Activated T-helper 2 cell treated with anti-CD3 and anti-CD28 coated beads, Interferon-gamma antibody, Interleukin-2, Interleukin-4, amounts not matched to agents 10 μg/mL and 5 μg/mL and 100 μg/mL, durations not matched to agents 14 hours and 24 hours and 36 hours (primary cell): ENCODE measurements at regions of chr3 and their contacts with region 1.

Region 1: DNA sequence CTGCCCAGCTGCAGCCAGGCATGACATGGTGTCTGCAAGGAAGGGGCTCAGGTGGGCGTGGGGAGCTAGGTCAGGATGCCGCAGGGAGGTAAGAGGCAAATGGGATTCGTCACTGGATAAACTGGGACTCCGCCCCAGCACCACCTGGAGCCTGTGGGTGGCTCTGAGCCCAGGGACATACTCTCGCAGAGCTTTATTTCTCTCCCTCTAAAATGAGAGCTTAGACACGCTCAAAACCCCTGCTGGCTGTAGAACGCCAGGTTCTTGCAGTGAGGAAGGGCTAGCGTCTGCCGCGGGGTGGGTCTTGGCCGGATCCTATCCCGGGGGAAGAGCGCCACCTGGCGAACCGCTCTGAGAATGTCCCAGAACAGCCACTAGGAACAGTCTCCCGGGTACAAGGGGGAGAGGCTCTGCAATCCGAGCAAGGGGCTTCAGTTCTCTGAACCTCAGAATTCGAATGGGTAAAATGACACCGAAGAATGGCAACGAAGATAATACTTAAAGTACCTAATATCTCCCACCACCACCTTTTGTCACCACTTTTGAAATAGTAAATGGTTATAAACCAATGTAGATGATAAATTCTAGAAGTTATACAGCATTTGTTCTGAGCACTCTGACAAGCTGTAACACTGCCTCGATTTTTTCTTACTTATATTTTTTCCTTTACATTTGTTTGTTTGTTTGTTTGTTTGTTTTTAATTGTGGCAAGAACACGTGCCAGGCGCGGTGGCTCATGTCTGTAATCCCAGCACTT is 53.2 kb upstream of the SRGAP3 start:
- DNase-seq: peak; percentile 70
- H3K4me3 Mint-ChIP-seq: peak overlapping the region; percentile 43
- H3K27ac Mint-ChIP-seq: no peak overlapping the region
- H3K4me1 Mint-ChIP-seq: peaks cover 13% of the 10 kb centered on the region
- H3K27me3 Mint-ChIP-seq: peaks cover 4% of the 10 kb centered on the region

Region 2: DNA sequence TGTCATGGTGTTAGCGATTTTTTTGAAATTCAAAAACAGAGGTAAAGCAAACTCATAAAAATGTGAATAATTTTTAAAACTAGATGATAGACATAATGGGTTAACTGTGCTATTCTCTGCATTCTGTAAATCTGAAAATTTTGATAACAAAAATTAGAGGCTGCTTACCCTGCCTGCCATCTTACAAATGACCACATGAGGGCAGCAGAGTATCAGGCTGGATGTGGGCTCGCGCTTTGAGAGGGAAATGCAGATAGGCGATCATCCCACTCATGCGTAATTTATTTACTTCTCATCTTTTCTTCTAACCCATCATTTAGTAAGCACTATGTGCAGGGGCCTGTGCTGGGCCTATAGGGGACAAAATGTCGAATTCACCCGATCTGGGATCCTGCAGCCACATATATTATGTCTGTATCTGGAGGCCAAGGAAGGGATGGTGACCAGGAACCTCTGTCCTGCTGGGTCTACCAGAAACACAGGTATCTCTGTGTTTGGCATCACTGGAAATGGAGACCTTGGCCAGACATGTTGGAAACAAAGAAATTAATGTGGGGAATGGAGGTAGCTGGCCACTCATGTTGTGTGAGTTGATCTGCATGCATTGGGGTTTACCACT is 331.5 kb before region 1 on chr3:
- intact Hi-C with region 1: loop called (anchors 1 kb)
- DNase-seq: peak; percentile 54
- H3K4me3 Mint-ChIP-seq: no peak overlapping the region
- H3K27ac Mint-ChIP-seq: no peak overlapping the region
- H3K4me1 Mint-ChIP-seq: peaks cover 5% of the 10 kb centered on the region
- H3K27me3 Mint-ChIP-seq: peaks cover 6% of the 10 kb centered on the region

Region 3: GRCh38 chr3:8987645-8988383 is 314.8 kb before region 1 on chr3:
- intact Hi-C with region 1: loop called (anchors 1 kb)
- DNase-seq: peak; percentile 50
- H3K4me3 Mint-ChIP-seq: no peak overlapping the region
- H3K27ac Mint-ChIP-seq: no peak overlapping the region
- H3K4me1 Mint-ChIP-seq: no peaks in the 10 kb centered on the region
- H3K27me3 Mint-ChIP-seq: no peaks in the 10 kb centered on the region

Region 4: GRCh38 chr3:9168241-9168741 is 134.3 kb before region 1 on chr3:
- intact Hi-C with region 1: loop called (anchors 5 kb)
- DNase-seq: peak; percentile 77
- H3K4me3 Mint-ChIP-seq: no peak overlapping the region
- H3K27ac Mint-ChIP-seq: no peak overlapping the region
- H3K4me1 Mint-ChIP-seq: peaks cover 27% of the 10 kb centered on the region
- H3K27me3 Mint-ChIP-seq: no peaks in the 10 kb centered on the region

Region 5: GRCh38 chr3:9224490-9224889 is 78.1 kb before region 1 on chr3:
- intact Hi-C with region 1: loop called (anchors 5 kb)
- DNase-seq: peak; percentile 34
- H3K4me3 Mint-ChIP-seq: peak overlapping the region; percentile 43
- H3K27ac Mint-ChIP-seq: no peak overlapping the region
- H3K4me1 Mint-ChIP-seq: peaks cover 61% of the 10 kb centered on the region
- H3K27me3 Mint-ChIP-seq: peaks cover 2% of the 10 kb centered on the region